Activated naive CD4-positive, alpha-beta T cell treated with anti-CD3 and anti-CD28 coated beads for 36 hours (primary cell): ENCODE measurements at regions of chr3 and their contacts with region 1.

Region 1: GRCh38 chr3:186259612-186260383 is 102.2 kb downstream of the DGKG start:
- DNase-seq: peak; percentile 78
- H3K4me3 Mint-ChIP-seq: peak overlapping the region; percentile 51
- H3K27ac Mint-ChIP-seq: peak overlapping the region; percentile 37
- H3K4me1 Mint-ChIP-seq: peaks cover 30% of the 10 kb centered on the region
- H3K27me3 Mint-ChIP-seq: peaks cover 2% of the 10 kb centered on the region

Region 2: GRCh38 chr3:185114756-185115155 is 1145.0 kb before region 1 on chr3:
- CTCF ChIA-PET with region 1: no interaction called
- intact Hi-C with region 1: no loop called
- DNase-seq: no peak
- H3K4me3 Mint-ChIP-seq: no peak overlapping the region
- H3K27ac Mint-ChIP-seq: no peak overlapping the region
- H3K4me1 Mint-ChIP-seq: no peaks in the 10 kb centered on the region
- H3K27me3 Mint-ChIP-seq: peaks cover 14% of the 10 kb centered on the region

Region 3: GRCh38 chr3:185976977-185977678 is 282.7 kb before region 1 on chr3:
- CTCF ChIA-PET with region 1: no interaction called
- intact Hi-C with region 1: loop called (anchors 5 kb)
- DNase-seq: peak; percentile 94
- H3K4me3 Mint-ChIP-seq: no peak overlapping the region
- H3K27ac Mint-ChIP-seq: no peak overlapping the region
- H3K4me1 Mint-ChIP-seq: peaks cover 9% of the 10 kb centered on the region
- H3K27me3 Mint-ChIP-seq: no peaks in the 10 kb centered on the region

Region 4: GRCh38 chr3:186097663-186098451 is 161.9 kb before region 1 on chr3:
- CTCF ChIA-PET with region 1: no interaction called
- intact Hi-C with region 1: no loop called
- DNase-seq: peak; percentile 17
- H3K4me3 Mint-ChIP-seq: peak overlapping the region; percentile 26
- H3K27ac Mint-ChIP-seq: no peak overlapping the region
- H3K4me1 Mint-ChIP-seq: peaks cover 9% of the 10 kb centered on the region
- H3K27me3 Mint-ChIP-seq: peaks cover 66% of the 10 kb centered on the region

Region 5: GRCh38 chr3:186400662-186401061 is 140.9 kb after region 1 on chr3:
- CTCF ChIA-PET with region 1: no interaction called
- intact Hi-C with region 1: no loop called
- DNase-seq: no peak
- H3K4me3 Mint-ChIP-seq: no peak overlapping the region
- H3K27ac Mint-ChIP-seq: no peak overlapping the region
- H3K4me1 Mint-ChIP-seq: peaks cover 2% of the 10 kb centered on the region
- H3K27me3 Mint-ChIP-seq: no peaks in the 10 kb centered on the region

Region 6: GRCh38 chr3:186413615-186414415 is 154.0 kb after region 1 on chr3:
- CTCF ChIA-PET with region 1: no interaction called
- intact Hi-C with region 1: loop called (anchors 1 kb)
- DNase-seq: peak; percentile 54
- H3K4me3 Mint-ChIP-seq: peak overlapping the region; percentile 56
- H3K27ac Mint-ChIP-seq: no peak overlapping the region
- H3K4me1 Mint-ChIP-seq: peaks cover 42% of the 10 kb centered on the region
- H3K27me3 Mint-ChIP-seq: peaks cover 18% of the 10 kb centered on the region

Region 7: GRCh38 chr3:186514296-186515002 is 254.7 kb after region 1 on chr3:
- CTCF ChIA-PET with region 1: no interaction called
- intact Hi-C with region 1: loop called (anchors 1 kb)
- DNase-seq: peak; percentile 71
- H3K4me3 Mint-ChIP-seq: no peak overlapping the region
- H3K27ac Mint-ChIP-seq: peak overlapping the region; percentile 78
- H3K4me1 Mint-ChIP-seq: peaks cover 79% of the 10 kb centered on the region
- H3K27me3 Mint-ChIP-seq: no peaks in the 10 kb centered on the region

Region 8: DNA sequence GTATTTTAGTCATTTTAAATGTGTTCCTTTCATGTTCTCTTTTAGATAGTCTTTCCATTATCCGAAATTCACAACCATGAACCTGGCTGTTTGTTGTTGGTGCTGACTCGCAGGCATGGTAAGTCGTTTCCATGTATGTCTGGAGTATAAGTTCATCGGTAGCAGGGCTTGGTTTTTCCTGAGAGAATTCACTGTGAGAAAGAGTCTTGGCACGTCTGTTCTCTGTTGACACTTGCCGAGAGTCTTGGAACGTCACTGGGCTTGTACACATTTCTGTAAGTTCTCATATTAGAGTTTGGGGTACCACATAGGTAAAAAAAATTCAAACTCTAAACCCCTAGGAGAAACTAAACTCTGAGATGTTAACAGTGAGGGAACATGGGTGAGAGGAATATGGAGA is 494.2 kb after region 1 on chr3:
- CTCF ChIA-PET with region 1: no interaction called
- intact Hi-C with region 1: loop called (anchors 1 kb)
- DNase-seq: no peak
- H3K4me3 Mint-ChIP-seq: no peak overlapping the region
- H3K27ac Mint-ChIP-seq: no peak overlapping the region
- H3K4me1 Mint-ChIP-seq: peaks cover 12% of the 10 kb centered on the region
- H3K27me3 Mint-ChIP-seq: no peaks in the 10 kb centered on the region